ENCODE measurements at regions of chr17 and their contacts with region 1.

Region 1: DNA sequence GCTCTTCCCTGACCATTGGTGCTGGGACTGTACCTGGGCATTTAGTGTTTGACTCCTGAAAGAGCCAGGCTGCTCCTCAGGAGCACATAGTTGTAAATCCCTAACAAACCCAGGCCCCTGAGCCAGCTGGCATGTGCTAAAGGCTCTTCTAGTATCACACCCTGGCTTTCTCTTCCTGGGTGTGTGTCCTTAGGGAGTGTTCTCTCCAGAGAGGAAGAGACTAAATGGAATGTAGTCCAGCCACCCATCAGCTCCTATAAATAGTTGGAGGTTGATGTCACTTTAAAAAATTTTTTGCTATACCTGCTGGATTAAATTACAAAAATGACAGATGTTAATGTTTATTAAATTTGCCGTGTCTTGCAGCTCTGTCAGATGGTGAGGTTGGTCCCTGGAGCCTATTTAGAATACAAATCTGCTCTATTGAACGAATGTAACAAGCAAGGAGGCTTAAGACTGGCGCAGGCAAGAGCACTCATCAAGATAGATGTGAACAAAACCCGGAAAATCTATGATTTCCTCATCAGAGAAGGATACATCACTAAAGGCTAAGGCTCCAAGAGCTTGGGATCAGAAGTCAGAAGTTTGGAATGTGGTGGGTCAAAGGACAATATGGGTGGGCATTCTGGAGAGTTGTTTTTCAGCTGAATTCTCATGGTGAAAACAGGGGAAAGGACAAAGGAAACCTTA is 13.1 kb upstream of the DUSP14 start:
- DNase-seq: peak; percentile 75
- H3K4me3 ChIP-seq: no peak overlapping the region
- H3K27ac ChIP-seq: peak overlapping the region; percentile 93
- H3K4me1 ChIP-seq: peaks cover 31% of the 10 kb centered on the region
- H3K27me3 ChIP-seq: no peaks in the 10 kb centered on the region
- CTCF ChIP-seq: no peak

Region 2: GRCh38 chr17:37465069-37465616 is 11.4 kb before region 1 on chr17:
- CTCF ChIA-PET with region 1: no interaction called
- dilution Hi-C with region 1: no loop called
- in situ Hi-C with region 1: no loop called
- intact Hi-C with region 1: loop called (anchors 1 kb)
- DNase-seq: peak; percentile 84
- H3K4me3 ChIP-seq: no peak overlapping the region
- H3K27ac ChIP-seq: peak overlapping the region; percentile 28
- H3K4me1 ChIP-seq: peaks cover 23% of the 10 kb centered on the region
- H3K27me3 ChIP-seq: no peaks in the 10 kb centered on the region
- CTCF ChIP-seq: no peak

Region 3: DNA sequence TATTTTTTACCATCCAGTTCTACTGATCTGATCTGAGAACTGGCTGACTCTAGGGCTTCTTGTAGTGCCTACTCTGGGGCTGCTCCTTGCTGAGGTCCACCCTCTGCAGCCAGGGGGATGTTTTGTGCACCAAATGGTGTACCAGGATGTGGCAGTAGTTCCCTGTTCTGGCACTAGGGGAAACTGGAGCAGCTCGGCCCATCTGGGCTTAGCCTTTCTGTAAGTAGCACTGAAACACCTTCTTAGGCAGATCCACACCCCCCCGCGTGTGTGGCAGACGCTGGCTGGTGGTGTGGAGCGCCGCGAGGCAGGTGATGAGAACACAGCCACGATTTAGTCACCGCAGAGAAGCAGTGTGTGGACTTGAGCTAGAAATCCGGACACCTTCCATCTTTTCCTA is 30.1 kb after region 1 on chr17:
- CTCF ChIA-PET with region 1: no interaction called
- dilution Hi-C with region 1: no loop called
- in situ Hi-C with region 1: no loop called
- intact Hi-C with region 1: no loop called
- DNase-seq: peak; percentile 26
- H3K4me3 ChIP-seq: no peak overlapping the region
- H3K27ac ChIP-seq: no peak overlapping the region
- H3K4me1 ChIP-seq: peaks cover 3% of the 10 kb centered on the region
- H3K27me3 ChIP-seq: no peaks in the 10 kb centered on the region
- CTCF ChIP-seq: peak; percentile 57 to 60

Region 4: GRCh38 chr17:37661400-37662014 is 184.9 kb after region 1 on chr17:
- CTCF ChIA-PET with region 1: no interaction called
- dilution Hi-C with region 1: no loop called
- in situ Hi-C with region 1: no loop called
- intact Hi-C with region 1: no loop called
- DNase-seq: no peak
- H3K4me3 ChIP-seq: no peak overlapping the region
- H3K27ac ChIP-seq: no peak overlapping the region
- H3K4me1 ChIP-seq: no peaks in the 10 kb centered on the region
- H3K27me3 ChIP-seq: no peaks in the 10 kb centered on the region
- CTCF ChIP-seq: peak in 1 of 2 donors; percentile 6